CD4-positive, alpha-beta memory T cell (primary cell): ENCODE measurements at regions of chr7 and their contacts with region 1.

Region 1: GRCh38 chr7:107725151-107725740 is 18.7 kb upstream of the CBLL1 start:
- DNase-seq: peak; percentile 41 to 54 (median 48)
- H3K4me3 ChIP-seq: no peak overlapping the region
- H3K4me3 Mint-ChIP-seq: no peak overlapping the region
- H3K27ac ChIP-seq: no peak overlapping the region
- H3K27ac Mint-ChIP-seq: no peak overlapping the region
- H3K4me1 ChIP-seq: no peaks in the 10 kb centered on the region
- H3K4me1 Mint-ChIP-seq: peaks cover 0 to 3% (median 0%) of the 10 kb centered on the region in 4 donors
- H3K27me3 ChIP-seq: no peaks in the 10 kb centered on the region
- H3K27me3 Mint-ChIP-seq: peaks cover 0 to 3% of the 10 kb centered on the region in 2 donors

Region 2: DNA sequence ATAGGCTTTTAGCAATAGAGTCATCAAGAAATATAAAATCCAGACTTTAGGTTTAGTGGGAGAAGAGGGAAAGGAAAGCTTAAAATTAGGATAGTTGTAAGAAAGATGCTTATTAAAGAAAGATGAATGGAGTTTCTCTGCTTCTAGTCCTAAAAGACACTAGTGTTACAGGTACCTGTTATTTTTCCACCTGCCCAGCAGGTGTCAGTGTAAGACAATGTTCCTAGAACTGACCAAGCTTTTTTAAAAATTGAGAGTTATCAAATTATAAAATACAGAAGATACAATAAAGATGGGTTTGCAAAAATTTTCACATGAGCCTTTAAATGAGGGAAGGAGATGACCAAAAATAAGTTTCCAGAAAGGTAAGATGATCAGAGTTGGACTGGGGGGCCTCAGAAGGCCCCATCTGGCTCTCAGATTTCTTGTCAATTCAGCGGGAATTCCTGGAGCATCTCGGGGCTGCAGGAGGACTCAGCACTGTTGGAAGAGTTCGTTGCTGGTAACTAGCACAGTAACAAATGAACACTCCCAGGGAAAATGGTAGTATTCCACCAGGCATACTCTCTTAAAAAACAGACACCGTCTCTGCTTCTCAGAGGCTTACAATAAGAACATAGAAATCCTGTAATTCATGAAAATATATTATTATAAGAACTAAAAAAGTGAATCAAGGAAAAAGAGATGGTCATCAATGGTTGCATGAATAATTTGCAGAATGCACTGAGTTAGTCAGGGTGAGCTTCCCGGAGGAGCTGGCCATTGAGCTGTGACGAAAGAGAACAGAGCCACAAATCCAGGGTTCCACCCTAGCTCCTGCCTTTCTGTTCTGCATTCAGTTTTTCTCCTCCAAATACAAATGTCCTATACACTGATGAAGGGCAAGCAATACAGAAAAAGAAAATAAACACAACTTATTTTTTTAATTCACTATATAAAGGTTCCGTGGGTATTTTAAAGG is 932.0 kb before region 1 on chr7:
- CTCF ChIA-PET with region 1: no interaction called
- POLR2A ChIA-PET with region 1: no interaction called
- intact Hi-C with region 1: loop called (anchors 1 kb)
- DNase-seq: peak in 4 of 5 donors; percentile 47 to 52 (median 48)
- H3K4me3 ChIP-seq: no peak overlapping the region
- H3K4me3 Mint-ChIP-seq: no peak overlapping the region
- H3K27ac ChIP-seq: no peak overlapping the region
- H3K27ac Mint-ChIP-seq: no peak overlapping the region
- H3K4me1 ChIP-seq: no peaks in the 10 kb centered on the region
- H3K4me1 Mint-ChIP-seq: peaks cover 0 to 3% (median 0%) of the 10 kb centered on the region in 4 donors
- H3K27me3 ChIP-seq: no peaks in the 10 kb centered on the region
- H3K27me3 Mint-ChIP-seq: peaks cover 2 to 3% of the 10 kb centered on the region in 2 donors

Region 3: DNA sequence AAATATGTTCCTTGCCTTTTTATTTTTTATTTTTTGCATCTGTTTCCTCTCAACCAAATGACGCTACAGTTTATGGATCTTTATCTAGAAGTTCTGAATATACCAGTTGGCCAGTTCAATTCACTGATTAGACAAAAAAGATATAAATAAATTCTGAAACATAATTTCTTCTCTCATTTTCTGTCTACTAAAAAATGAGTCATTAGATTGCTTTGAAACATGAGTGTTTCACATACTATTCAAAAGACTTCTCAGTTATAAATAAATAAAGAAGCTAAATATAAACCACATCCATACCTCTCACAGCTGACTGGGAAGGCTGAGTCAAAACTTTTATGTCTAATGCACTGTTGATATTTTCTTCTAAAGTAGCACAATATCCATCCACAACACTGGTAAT is 352.9 kb before region 1 on chr7:
- CTCF ChIA-PET with region 1: no interaction called
- POLR2A ChIA-PET with region 1: no interaction called
- intact Hi-C with region 1: loop called (anchors 5 kb)
- DNase-seq: no peak
- H3K4me3 ChIP-seq: no peak overlapping the region
- H3K4me3 Mint-ChIP-seq: no peak overlapping the region
- H3K27ac ChIP-seq: no peak overlapping the region
- H3K27ac Mint-ChIP-seq: no peak overlapping the region
- H3K4me1 ChIP-seq: no peaks in the 10 kb centered on the region
- H3K4me1 Mint-ChIP-seq: peaks cover 0 to 3% (median 0%) of the 10 kb centered on the region in 4 donors
- H3K27me3 ChIP-seq: no peaks in the 10 kb centered on the region
- H3K27me3 Mint-ChIP-seq: no peaks in the 10 kb centered on the region

Region 4: GRCh38 chr7:107462740-107463444 is 262.4 kb before region 1 on chr7:
- CTCF ChIA-PET with region 1: interaction called, 51 read pairs
- POLR2A ChIA-PET with region 1: no interaction called
- intact Hi-C with region 1: loop called (anchors 1 kb)
- DNase-seq: peak; percentile 36 to 51 (median 46)
- H3K4me3 ChIP-seq: no peak overlapping the region
- H3K4me3 Mint-ChIP-seq: no peak overlapping the region
- H3K27ac ChIP-seq: no peak overlapping the region
- H3K27ac Mint-ChIP-seq: peak overlapping the region in 2 of 7 donors; percentile 6 to 17
- H3K4me1 ChIP-seq: no peaks in the 10 kb centered on the region
- H3K4me1 Mint-ChIP-seq: peaks cover 0 to 5% (median under 1%) of the 10 kb centered on the region in 4 donors
- H3K27me3 ChIP-seq: no peaks in the 10 kb centered on the region
- H3K27me3 Mint-ChIP-seq: no peaks in the 10 kb centered on the region